HepG2 (cell line): ENCODE measurements at regions of chr2 and their contacts with region 1.

Region 1: DNA sequence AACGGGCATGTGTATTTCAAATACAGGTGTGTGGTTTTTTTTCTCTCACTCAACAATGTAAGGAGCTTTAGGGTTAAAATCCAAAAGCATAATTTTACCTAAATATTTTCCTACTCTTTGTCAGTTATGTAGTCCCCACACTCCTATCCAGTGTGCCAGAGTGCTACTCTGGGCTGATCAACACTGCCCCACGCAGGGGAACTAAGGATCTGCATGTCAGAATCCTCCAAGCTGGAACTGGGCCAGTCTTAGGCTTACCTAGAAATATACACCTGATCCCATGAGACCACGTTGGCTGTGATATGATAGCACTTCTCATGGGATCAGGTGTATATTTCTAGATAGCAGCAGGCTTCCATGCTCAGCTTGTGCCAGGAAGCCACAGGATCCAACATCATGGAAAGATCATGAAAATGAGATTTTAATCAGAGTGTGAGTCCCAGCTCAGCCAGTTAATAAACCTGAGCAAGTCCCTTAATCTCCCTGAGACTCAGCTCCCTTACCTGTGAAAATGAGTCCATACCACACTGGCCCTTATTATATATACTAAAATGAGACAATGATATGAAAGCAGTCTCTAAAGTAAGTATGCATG is 29.7 kb downstream of the CCDC141 start:
- DNase-seq: peak; percentile 44
- ATAC-seq: peak; percentile 100
- H3K4me3 ChIP-seq: no peak overlapping the region
- H3K27ac ChIP-seq: no peak overlapping the region
- H3K4me1 ChIP-seq: no peaks in the 10 kb centered on the region
- H3K27me3 ChIP-seq: no peaks in the 10 kb centered on the region
- CTCF ChIP-seq: peak; percentile 72
- EP300 ChIP-seq: no peak
- POLR2A ChIP-seq: no peak
- RAD21 ChIP-seq: no peak

Region 2: GRCh38 chr2:178891265-178891958 is 128.8 kb before region 1 on chr2:
- CTCF ChIA-PET with region 1: no interaction called
- POLR2A ChIA-PET with region 1: no interaction called
- in situ Hi-C with region 1: no loop called
- intact Hi-C with region 1: loop called (anchors 1 kb)
- DNase-seq: peak; percentile 39
- ATAC-seq: peak; percentile 87
- H3K4me3 ChIP-seq: no peak overlapping the region
- H3K27ac ChIP-seq: no peak overlapping the region
- H3K4me1 ChIP-seq: no peaks in the 10 kb centered on the region
- H3K27me3 ChIP-seq: no peaks in the 10 kb centered on the region
- CTCF ChIP-seq: peak; percentile 77
- EP300 ChIP-seq: no peak
- POLR2A ChIP-seq: no peak
- RAD21 ChIP-seq: peak; percentile 42; the same call in 1 of the 2 replicates

Region 3: DNA sequence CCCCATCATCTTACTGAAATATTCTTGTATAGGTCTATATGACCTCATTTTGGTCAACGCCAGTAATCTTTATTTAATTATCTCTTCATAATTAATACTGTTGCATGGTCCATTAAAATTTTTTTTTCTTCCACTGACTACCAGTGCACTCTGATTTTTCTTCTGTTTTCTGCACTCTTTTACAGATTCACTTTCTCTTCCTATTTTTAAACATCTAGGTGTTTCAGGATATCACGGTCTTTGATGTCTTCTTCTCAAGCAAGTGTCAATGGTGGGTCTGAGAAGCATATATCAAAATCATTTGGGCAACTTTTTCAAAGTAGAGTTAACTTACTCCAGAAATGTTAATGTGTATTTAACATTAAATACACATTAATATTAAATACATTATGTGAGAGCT is 21.7 kb before region 1 on chr2:
- CTCF ChIA-PET with region 1: no interaction called
- POLR2A ChIA-PET with region 1: no interaction called
- in situ Hi-C with region 1: no loop called
- intact Hi-C with region 1: no loop called
- DNase-seq: no peak
- ATAC-seq: no peak
- H3K4me3 ChIP-seq: no peak overlapping the region
- H3K27ac ChIP-seq: no peak overlapping the region
- H3K4me1 ChIP-seq: no peaks in the 10 kb centered on the region
- H3K27me3 ChIP-seq: no peaks in the 10 kb centered on the region
- CTCF ChIP-seq: no peak
- EP300 ChIP-seq: no peak
- POLR2A ChIP-seq: no peak
- RAD21 ChIP-seq: no peak

Region 4: DNA sequence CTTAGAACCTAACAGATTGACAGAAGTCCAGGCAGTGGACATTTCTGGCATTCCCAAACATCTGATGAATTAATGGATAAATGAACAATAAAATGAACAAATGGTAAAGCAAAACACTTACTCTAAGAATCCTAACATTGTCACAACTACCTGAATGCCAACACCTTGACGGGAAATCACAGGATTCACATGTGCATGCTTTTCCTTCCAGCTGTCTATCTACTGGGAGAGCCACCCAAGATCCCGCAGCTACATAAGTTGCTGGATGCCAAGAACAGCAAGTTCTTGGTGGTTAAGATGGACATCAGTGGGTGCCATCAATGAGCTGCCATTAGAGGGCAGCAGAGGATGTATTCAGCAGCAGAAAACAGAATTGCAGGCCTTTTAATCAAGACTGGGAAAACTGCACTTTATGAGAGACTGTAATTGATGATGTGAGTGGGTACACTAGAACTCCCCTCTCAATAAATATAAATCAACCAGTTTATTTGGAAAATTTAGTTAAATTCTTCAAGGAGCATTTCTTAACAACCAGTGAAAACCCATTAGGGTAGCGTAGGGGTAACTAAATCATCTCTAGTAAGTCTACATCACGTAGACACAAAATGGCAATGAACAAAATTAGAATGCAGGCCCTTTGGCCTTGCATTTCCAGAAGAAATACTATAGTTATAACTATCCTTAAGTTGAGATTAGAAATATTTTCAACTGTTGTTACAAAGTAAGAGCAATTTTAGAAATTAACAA is 198.8 kb after region 1 on chr2:
- CTCF ChIA-PET with region 1: no interaction called
- POLR2A ChIA-PET with region 1: no interaction called
- in situ Hi-C with region 1: no loop called
- intact Hi-C with region 1: no loop called
- DNase-seq: peak; percentile 73
- ATAC-seq: peak; percentile 94
- H3K4me3 ChIP-seq: no peak overlapping the region
- H3K27ac ChIP-seq: no peak overlapping the region
- H3K4me1 ChIP-seq: no peaks in the 10 kb centered on the region; the same call in 1 of the 2 replicates
- H3K27me3 ChIP-seq: no peaks in the 10 kb centered on the region
- CTCF ChIP-seq: peak; percentile 92
- EP300 ChIP-seq: no peak
- POLR2A ChIP-seq: no peak
- RAD21 ChIP-seq: peak; percentile 86